ENCODE measurements at regions of chr5 and their contacts with region 1.

Region 1: DNA sequence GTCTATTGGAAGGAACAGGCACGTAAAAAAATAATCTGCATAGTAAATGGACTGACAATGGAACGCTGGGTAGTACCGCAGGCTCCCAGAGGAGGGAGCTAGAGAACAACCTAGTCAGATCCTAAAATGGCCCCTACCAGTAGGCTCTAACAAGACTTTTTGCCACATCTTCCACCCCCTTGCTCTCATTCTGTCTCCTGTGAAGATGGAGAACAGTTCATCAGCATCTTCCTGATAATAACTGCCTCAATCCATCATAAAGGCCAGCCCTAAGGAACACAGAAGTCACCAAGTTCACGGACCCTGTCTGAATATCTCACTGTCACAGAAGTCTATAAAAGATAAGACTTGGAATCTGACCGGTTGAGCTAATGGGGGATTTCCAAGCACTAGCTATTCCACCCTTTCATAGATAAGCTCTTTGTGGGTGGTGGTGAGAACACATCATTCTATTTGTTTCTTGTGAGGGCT is 133.4 kb downstream of the SLC1A3 start:
- DNase-seq: peak; percentile 86
- H3K4me3 ChIP-seq: no peak overlapping the region
- H3K27ac ChIP-seq: no peak overlapping the region
- H3K4me1 ChIP-seq: peaks cover 0 to 14% (median 12%) of the 10 kb centered on the region in 4 donors
- H3K27me3 ChIP-seq: peaks cover 5% of the 10 kb centered on the region
- CTCF ChIP-seq: peak; percentile 74 to 86 (median 81)
- EP300 ChIP-seq: no peak
- POLR2A ChIP-seq: no peak

Region 2: GRCh38 chr5:36638056-36638455 is 101.7 kb before region 1 on chr5:
- in situ Hi-C with region 1: no loop called
- intact Hi-C with region 1: no loop called
- DNase-seq: no peak
- H3K4me3 ChIP-seq: no peak overlapping the region
- H3K27ac ChIP-seq: no peak overlapping the region
- H3K4me1 ChIP-seq: no peaks in the 10 kb centered on the region
- H3K27me3 ChIP-seq: no peaks in the 10 kb centered on the region
- CTCF ChIP-seq: no peak
- EP300 ChIP-seq: no peak
- POLR2A ChIP-seq: no peak

Region 3: GRCh38 chr5:36790838-36791237 is 51.1 kb after region 1 on chr5:
- in situ Hi-C with region 1: no loop called
- intact Hi-C with region 1: no loop called
- DNase-seq: no peak
- H3K4me3 ChIP-seq: no peak overlapping the region
- H3K27ac ChIP-seq: no peak overlapping the region
- H3K4me1 ChIP-seq: peaks cover 0 to 3% (median 1%) of the 10 kb centered on the region in 4 donors
- H3K27me3 ChIP-seq: no peaks in the 10 kb centered on the region
- CTCF ChIP-seq: no peak
- EP300 ChIP-seq: no peak
- POLR2A ChIP-seq: no peak

Region 4: GRCh38 chr5:36866174-36866573 is 126.4 kb after region 1 on chr5:
- in situ Hi-C with region 1: loop called (anchors 5 to 10 kb)
- intact Hi-C with region 1: loop called (anchors 10 kb)
- DNase-seq: no peak
- H3K4me3 ChIP-seq: no peak overlapping the region
- H3K27ac ChIP-seq: no peak overlapping the region
- H3K4me1 ChIP-seq: peaks cover 0 to 7% (median 0%) of the 10 kb centered on the region in 4 donors
- H3K27me3 ChIP-seq: no peaks in the 10 kb centered on the region
- CTCF ChIP-seq: no peak
- EP300 ChIP-seq: no peak
- POLR2A ChIP-seq: no peak

Region 5: GRCh38 chr5:36875790-36876388 is 136.1 kb after region 1 on chr5:
- in situ Hi-C with region 1: loop called in 1 of 4 experiments (anchors 10 kb)
- intact Hi-C with region 1: no loop called
- DNase-seq: peak; percentile 86
- H3K4me3 ChIP-seq: peak overlapping the region; percentile 66 to 90 (median 84)
- H3K27ac ChIP-seq: peak overlapping the region; percentile 97 to 99 (median 98)
- H3K4me1 ChIP-seq: peaks cover 19 to 48% (median 38%) of the 10 kb centered on the region in 4 donors
- H3K27me3 ChIP-seq: no peaks in the 10 kb centered on the region
- CTCF ChIP-seq: peak; percentile 39 to 56 (median 43)
- EP300 ChIP-seq: no peak
- POLR2A ChIP-seq: no peak

Region 6: GRCh38 chr5:37005946-37006540 is 266.3 kb after region 1 on chr5:
- in situ Hi-C with region 1: loop called (anchors 10 to 25 kb)
- intact Hi-C with region 1: no loop called
- DNase-seq: no peak
- H3K4me3 ChIP-seq: no peak overlapping the region
- H3K27ac ChIP-seq: no peak overlapping the region
- H3K4me1 ChIP-seq: no peaks in the 10 kb centered on the region
- H3K27me3 ChIP-seq: no peaks in the 10 kb centered on the region
- CTCF ChIP-seq: peak; percentile 39 to 64 (median 52)
- EP300 ChIP-seq: no peak
- POLR2A ChIP-seq: no peak

Measured in transverse colon (tissue), 4 donors.